Sigmoid colon (tissue), 7 donors: ENCODE measurements at regions of chr11 and their contacts with region 1.

Region 1: GRCh38 chr11:120511116-120511819 is at the start of gene GRIK4:
- DNase-seq: peak; percentile 91
- H3K4me3 ChIP-seq: peak within 1 kb of the TSS in 3 of 4 donors; percentile 44 to 55 (median 55)
- H3K27ac ChIP-seq: no peak within 1 kb of the TSS
- H3K4me1 ChIP-seq: peaks cover 0 to 7% (median 5%) of the 10 kb centered on the region in 4 donors
- H3K27me3 ChIP-seq: peaks cover 4 to 12% (median 8%) of the 10 kb centered on the region in 3 donors
- CTCF ChIP-seq: peak; percentile 73 to 88 (median 86)
- EP300 ChIP-seq: no peak
- POLR2A ChIP-seq: no peak
- total RNA-seq, gene GRIK4: 0.27 to 0.36 TPM in 2 of 4 donors, not detected in the others

Region 2: GRCh38 chr11:120532082-120532831 is 21.0 kb after region 1 on chr11:
- intact Hi-C with region 1: no loop called
- DNase-seq: no peak
- H3K4me3 ChIP-seq: no peak overlapping the region
- H3K27ac ChIP-seq: no peak overlapping the region
- H3K4me1 ChIP-seq: peaks cover 0 to 8% (median 2%) of the 10 kb centered on the region in 4 donors
- H3K27me3 ChIP-seq: peaks cover 0 to 11% (median 0%) of the 10 kb centered on the region in 3 donors
- CTCF ChIP-seq: no peak
- EP300 ChIP-seq: no peak
- POLR2A ChIP-seq: no peak

Region 3: DNA sequence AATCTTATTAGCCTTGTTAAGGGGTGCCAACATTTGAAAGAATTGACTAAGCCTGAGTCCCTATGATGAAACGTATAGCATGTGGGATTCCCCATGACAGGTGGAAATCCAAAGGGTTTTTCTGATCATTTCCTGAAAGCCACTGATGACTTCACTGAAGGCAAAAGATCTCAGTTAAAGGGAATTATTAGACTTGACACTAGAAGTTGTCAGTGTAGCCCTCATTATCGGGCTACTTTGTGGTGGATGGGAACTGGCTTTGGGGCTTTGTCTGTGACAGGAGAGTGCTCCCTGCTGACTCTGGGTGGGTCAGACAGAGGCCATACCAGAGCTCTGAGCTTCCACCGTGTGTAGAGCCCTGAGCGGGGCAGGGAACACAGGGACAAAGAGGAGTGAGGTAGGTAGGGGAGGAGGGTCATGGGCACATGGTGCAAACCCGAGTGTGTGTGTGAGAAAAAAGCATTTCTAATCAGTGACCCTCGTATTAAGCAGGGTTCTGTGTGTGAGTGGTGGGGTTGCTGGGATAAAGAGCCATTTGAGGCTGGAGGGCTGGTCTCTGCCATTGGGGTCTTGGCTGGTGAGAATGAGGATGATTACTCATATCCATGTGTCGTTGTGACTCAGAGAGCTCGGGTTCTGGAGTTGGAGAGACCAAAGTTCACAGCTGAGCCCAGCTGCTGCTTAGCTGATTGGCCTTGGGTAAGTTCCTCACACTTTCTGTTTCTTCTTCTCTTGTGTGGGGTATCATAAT is 101.4 kb after region 1 on chr11:
- intact Hi-C with region 1: no loop called
- DNase-seq: no peak
- H3K4me3 ChIP-seq: no peak overlapping the region
- H3K27ac ChIP-seq: peak overlapping the region in 1 of 4 donors; percentile 27
- H3K4me1 ChIP-seq: peaks cover 0 to 7% (median 0%) of the 10 kb centered on the region in 4 donors
- H3K27me3 ChIP-seq: no peaks in the 10 kb centered on the region
- CTCF ChIP-seq: no peak
- EP300 ChIP-seq: no peak
- POLR2A ChIP-seq: no peak

Region 4: DNA sequence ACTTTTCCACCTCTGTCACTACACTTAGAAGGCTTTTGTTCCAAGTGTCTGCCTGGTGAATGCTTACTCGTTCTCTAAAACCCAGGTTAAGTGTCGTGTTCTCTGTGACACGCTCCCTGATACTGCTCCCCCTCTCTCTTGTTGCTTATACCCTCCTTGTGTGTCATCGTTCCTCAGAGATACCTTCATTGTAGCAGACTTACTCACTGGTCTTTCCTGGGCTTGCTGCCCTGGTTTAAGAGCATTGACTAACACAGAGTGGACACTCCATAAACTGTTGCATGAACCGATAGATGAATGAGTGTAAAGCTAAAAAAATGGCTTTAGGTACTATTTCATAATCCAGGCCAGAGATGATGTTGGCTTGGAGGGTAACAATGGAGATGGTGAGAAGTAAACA is 171.6 kb after region 1 on chr11:
- intact Hi-C with region 1: loop called (anchors 1 kb)
- DNase-seq: no peak
- H3K4me3 ChIP-seq: no peak overlapping the region
- H3K27ac ChIP-seq: no peak overlapping the region
- H3K4me1 ChIP-seq: no peaks in the 10 kb centered on the region
- H3K27me3 ChIP-seq: no peaks in the 10 kb centered on the region
- CTCF ChIP-seq: no peak
- EP300 ChIP-seq: no peak
- POLR2A ChIP-seq: no peak

Region 5: DNA sequence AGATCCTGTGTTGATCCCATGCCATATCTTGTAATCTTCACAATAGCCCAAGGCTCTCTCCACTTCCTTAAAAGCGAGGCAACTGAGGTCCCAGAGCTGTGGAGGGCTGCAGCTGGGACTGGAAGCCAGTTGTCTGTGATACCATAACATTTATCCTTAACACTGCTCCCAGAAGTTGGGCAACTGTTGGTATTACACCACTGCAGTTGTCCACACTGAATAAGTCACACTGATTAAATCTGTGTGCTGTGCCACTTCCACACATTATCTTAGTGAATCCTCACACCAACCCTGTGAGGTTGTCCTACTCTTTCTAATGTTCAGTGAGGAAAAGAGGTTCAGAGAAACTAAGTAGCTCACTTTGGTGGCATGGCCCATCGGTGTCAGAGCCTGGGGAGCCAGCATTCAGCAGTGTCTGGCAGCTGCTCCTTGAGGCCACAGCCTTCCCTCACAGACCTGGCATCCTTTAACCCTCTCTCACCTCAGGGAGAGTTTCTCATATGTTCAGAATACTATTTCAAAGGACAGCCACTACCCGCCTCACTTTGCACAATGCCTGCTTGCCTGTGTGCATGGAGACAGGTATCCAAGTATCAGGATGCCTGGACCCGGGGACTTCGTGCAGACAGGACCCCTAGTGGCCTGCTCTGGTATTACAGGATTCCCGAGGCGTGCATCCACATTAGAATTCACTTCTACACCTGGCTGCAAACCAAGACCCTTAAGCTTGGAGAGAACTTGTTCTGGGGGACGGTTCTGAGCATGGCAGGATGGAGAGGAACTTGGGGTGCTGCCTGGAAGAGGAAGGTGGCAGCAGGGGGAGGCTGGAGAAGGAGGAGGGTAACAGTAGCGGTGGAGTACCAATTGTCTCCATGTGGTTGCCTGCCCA is 290.8 kb after region 1 on chr11:
- intact Hi-C with region 1: loop called (anchors 2 kb)
- DNase-seq: peak; percentile 72
- H3K4me3 ChIP-seq: no peak overlapping the region
- H3K27ac ChIP-seq: no peak overlapping the region
- H3K4me1 ChIP-seq: peaks cover 0 to under 1% (median 0%) of the 10 kb centered on the region in 4 donors
- H3K27me3 ChIP-seq: peaks cover 0 to 11% (median 0%) of the 10 kb centered on the region in 3 donors
- CTCF ChIP-seq: peak; percentile 49 to 91 (median 78)
- EP300 ChIP-seq: no peak
- POLR2A ChIP-seq: no peak

Region 6: GRCh38 chr11:120952461-120953434 is 441.5 kb after region 1 on chr11:
- intact Hi-C with region 1: loop called (anchors 1 kb)
- DNase-seq: peak; percentile 79
- H3K4me3 ChIP-seq: peak overlapping the region in 1 of 4 donors; percentile 13
- H3K27ac ChIP-seq: no peak overlapping the region
- H3K4me1 ChIP-seq: peaks cover 0 to 5% (median 2%) of the 10 kb centered on the region in 4 donors
- H3K27me3 ChIP-seq: peaks cover 0 to 15% (median 0%) of the 10 kb centered on the region in 3 donors
- CTCF ChIP-seq: peak; percentile 16 to 68 (median 62)
- EP300 ChIP-seq: no peak
- POLR2A ChIP-seq: no peak

Region 7: DNA sequence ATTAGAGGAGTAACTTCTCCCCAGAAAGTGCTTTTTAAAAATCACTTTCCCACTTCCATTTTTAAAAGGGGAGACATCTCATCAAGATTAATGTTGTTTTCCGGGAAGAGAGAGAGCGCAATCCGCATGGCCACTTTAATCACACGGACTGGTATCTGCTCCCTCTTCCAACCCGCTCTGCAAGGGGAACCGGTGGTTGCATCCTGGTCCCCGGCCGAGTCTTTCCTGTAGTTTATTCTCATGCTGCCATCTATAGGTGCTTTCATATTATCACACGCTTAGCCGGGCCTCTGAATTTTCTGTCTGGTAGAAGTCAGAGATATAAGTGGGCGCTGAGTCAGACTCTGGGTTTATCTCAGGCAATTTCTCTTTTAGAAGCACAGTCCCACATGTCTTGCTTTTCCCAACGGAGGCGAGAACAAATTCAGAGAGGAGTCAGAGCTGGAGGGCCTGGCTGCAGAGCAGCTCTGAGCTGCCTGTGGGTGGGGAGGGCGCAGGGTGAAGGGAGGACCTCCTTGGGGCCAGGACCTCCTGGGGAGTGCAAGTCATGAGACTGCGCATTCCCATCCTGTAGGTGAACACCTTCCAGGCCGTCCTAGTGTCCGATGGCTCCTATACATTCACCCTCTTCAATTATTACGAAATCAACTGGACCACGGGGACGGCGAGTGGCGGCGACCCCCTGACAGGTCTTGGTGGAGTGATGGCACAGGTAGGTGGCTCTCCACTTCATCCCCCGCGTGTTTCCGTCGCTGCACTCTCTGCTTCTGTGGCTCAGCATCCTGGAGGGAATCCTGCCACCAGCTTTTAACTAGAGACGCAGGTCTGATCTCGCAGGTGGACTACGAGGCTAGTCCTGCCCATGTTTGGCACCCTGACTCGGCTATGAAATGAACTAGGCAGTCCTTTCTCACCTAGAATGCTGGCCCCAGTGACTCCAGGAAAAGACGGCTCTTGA is 601.5 kb after region 1 on chr11:
- intact Hi-C with region 1: loop called (anchors 2 kb)
- DNase-seq: peak; percentile 76
- H3K4me3 ChIP-seq: no peak overlapping the region
- H3K27ac ChIP-seq: no peak overlapping the region
- H3K4me1 ChIP-seq: peaks cover 0 to 3% (median 0%) of the 10 kb centered on the region in 4 donors
- H3K27me3 ChIP-seq: no peaks in the 10 kb centered on the region
- CTCF ChIP-seq: peak; percentile 14 to 53 (median 46)
- EP300 ChIP-seq: no peak
- POLR2A ChIP-seq: no peak

Region 8: DNA sequence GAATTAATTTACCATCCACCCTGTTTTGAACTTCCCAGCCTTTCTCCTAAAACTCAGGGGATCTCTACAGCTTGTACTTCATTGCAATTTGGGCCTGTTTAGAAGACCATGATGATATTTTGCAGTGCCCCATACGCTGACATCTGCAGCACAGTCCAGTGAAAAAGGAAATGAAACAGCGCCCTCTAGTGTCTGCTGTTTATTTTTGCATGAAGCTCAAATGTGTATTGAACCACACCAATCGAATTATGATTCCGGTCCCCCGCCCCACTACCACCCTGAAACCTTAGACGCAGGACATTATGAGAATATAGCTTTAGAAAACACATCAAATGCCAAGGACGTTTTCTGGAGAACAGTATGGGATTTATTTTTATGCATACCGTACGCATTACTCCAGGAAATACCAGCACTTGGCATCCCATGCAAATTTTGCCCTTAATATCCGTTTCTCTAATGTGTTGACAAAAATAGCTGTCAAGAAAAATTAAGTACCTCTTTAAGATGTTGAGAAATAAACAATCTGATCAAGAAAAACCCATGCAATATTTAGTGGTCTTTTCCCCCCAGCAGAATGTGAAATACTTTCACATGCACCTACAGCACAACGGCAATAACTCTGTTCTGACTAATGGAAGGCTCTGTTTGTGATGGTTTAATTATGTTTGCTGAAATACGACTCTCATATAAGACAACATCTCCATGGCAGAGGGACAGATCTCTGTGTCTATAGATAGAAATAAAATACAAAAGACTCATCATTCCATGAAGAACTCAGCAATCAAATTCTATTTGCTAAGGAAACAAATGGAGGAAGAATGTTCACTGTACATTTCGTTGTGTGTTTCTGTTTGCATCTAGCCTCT is 683.7 kb after region 1 on chr11:
- intact Hi-C with region 1: loop called (anchors 2 kb)
- DNase-seq: no peak
- H3K4me3 ChIP-seq: no peak overlapping the region
- H3K27ac ChIP-seq: no peak overlapping the region
- H3K4me1 ChIP-seq: peaks cover 0 to 10% (median 2%) of the 10 kb centered on the region in 4 donors
- H3K27me3 ChIP-seq: no peaks in the 10 kb centered on the region
- CTCF ChIP-seq: peak; percentile 69 to 86 (median 74)
- EP300 ChIP-seq: no peak
- POLR2A ChIP-seq: no peak